AG04449 (cell line): ENCODE measurements at regions of chr11 and their contacts with region 1.

Region 1: GRCh38 chr11:33542921-33543320 is 157.7 kb downstream of the C11orf91 start:
- DNase-seq: no peak
- H3K4me3 ChIP-seq: no peak overlapping the region
- CTCF ChIP-seq: peak; percentile 68

Region 2: GRCh38 chr11:32472226-32472625 is 1070.7 kb before region 1 on chr11:
- CTCF ChIA-PET with region 1: no interaction called
- POLR2A ChIA-PET with region 1: no interaction called
- DNase-seq: no peak
- H3K4me3 ChIP-seq: no peak overlapping the region
- CTCF ChIP-seq: no peak

Region 3: GRCh38 chr11:33362051-33362910 is 180.6 kb before region 1 on chr11:
- CTCF ChIA-PET with region 1: interaction called, 13 read pairs
- POLR2A ChIA-PET with region 1: no interaction called
- DNase-seq: no peak
- H3K4me3 ChIP-seq: no peak overlapping the region
- CTCF ChIP-seq: no peak

Region 4: DNA sequence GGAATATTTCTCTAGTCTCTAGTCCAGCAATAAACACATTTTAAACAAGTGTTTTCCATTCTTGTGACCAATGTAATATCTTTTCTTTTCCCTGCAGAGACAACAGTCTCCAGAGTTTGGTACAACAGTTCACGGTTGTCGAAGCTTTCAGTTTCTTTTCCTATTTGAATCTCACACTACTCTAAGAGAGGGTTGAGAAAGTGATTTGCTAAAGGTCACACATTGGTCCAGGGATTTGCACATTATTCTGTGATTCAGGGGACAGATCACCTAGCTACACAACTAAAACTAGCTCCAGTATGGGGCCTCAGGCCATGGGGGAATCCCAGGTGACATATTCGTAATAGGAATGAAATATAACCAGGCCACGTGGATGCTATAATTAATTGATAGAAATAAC is 153.3 kb before region 1 on chr11:
- CTCF ChIA-PET with region 1: no interaction called
- POLR2A ChIA-PET with region 1: no interaction called
- DNase-seq: no peak
- H3K4me3 ChIP-seq: no peak overlapping the region
- CTCF ChIP-seq: no peak

Region 5: GRCh38 chr11:33531743-33532181 is 11.2 kb before region 1 on chr11:
- CTCF ChIA-PET with region 1: interaction called, 36 read pairs
- POLR2A ChIA-PET with region 1: no interaction called
- DNase-seq: peak; percentile 46
- H3K4me3 ChIP-seq: no peak overlapping the region
- CTCF ChIP-seq: no peak

Region 6: GRCh38 chr11:33553486-33553885 is 10.6 kb after region 1 on chr11:
- CTCF ChIA-PET with region 1: interaction called, 15 read pairs
- POLR2A ChIA-PET with region 1: no interaction called
- DNase-seq: no peak
- H3K4me3 ChIP-seq: no peak overlapping the region
- CTCF ChIP-seq: no peak